ENCODE measurements at regions of chr12 and their contacts with region 1.

Region 1: GRCh38 chr12:6639151-6639801 is 3.5 kb upstream of the LPAR5 start:
- DNase-seq: no peak
- H3K4me3 ChIP-seq: no peak overlapping the region
- H3K27ac ChIP-seq: no peak overlapping the region
- H3K4me1 ChIP-seq: peaks cover 22% of the 10 kb centered on the region
- H3K27me3 ChIP-seq: no peaks in the 10 kb centered on the region; the same call in 1 of the 2 replicates
- CTCF ChIP-seq: no peak

Region 2: GRCh38 chr12:6363611-6364328 is 275.5 kb before region 1 on chr12:
- CTCF ChIA-PET with region 1: interaction called, 14 read pairs
- POLR2A ChIA-PET with region 1: no interaction called
- intact Hi-C with region 1: no loop called
- DNase-seq: peak; percentile 70 to 82
- H3K4me3 ChIP-seq: peak overlapping the region; percentile 64
- H3K27ac ChIP-seq: peak overlapping the region; percentile 86
- H3K4me1 ChIP-seq: peaks cover 69% of the 10 kb centered on the region
- H3K27me3 ChIP-seq: no peaks in the 10 kb centered on the region
- CTCF ChIP-seq: no peak; the same call in 1 of the 2 replicates

Region 3: DNA sequence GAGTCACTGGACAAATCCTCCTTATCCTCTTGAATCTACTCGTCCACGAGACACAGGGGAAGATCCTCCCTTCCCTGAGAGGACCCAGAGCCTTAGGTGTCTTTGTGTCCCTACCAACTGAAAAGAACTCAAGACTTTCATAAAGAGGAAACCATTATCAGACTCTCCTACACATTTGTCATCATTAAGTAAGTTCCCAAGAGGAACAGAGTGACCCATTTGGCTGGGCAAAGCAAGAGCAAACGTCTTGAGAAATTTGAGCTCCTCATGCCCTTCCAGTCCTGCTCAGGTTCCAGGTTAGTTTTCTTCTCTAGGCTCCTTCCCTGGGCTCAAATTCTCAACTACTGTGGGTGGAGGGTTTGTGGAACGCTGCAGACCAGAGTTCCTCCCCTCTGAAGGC is 107.9 kb after region 1 on chr12:
- CTCF ChIA-PET with region 1: no interaction called
- POLR2A ChIA-PET with region 1: no interaction called
- intact Hi-C with region 1: no loop called
- DNase-seq: peak in 1 of 2 experiments; percentile 9
- H3K4me3 ChIP-seq: no peak overlapping the region
- H3K27ac ChIP-seq: no peak overlapping the region
- H3K4me1 ChIP-seq: peaks cover 16% of the 10 kb centered on the region
- H3K27me3 ChIP-seq: no peaks in the 10 kb centered on the region
- CTCF ChIP-seq: no peak

Measured in PC-9 (cell line).